GM12878 (cell line): ENCODE measurements at regions of chr5 and their contacts with region 1.

Region 1: GRCh38 chr5:132064738-132065331 is 4.4 kb downstream of the IL3 start:
- DNase-seq: peak; percentile 45
- ATAC-seq: peak; percentile 91
- H3K4me3 ChIP-seq: no peak overlapping the region
- H3K27ac ChIP-seq: no peak overlapping the region
- H3K4me1 ChIP-seq: no peaks in the 10 kb centered on the region; the same call in 1 of the 2 replicates
- H3K27me3 ChIP-seq: no peaks in the 10 kb centered on the region; a peak in 1 of 4 replicates
- CTCF ChIP-seq: peak; percentile 93 to 97 (median 97)
- EP300 ChIP-seq: no peak
- POLR2A ChIP-seq: no peak
- RAD21 ChIP-seq: peak; percentile 90

Region 2: GRCh38 chr5:131423056-131423455 is 641.8 kb before region 1 on chr5:
- CTCF ChIA-PET with region 1: interaction called, 12 read pairs
- POLR2A ChIA-PET with region 1: no interaction called
- RAD21 ChIA-PET with region 1: no interaction called
- SMC1A ChIA-PET with region 1: no interaction called
- in situ Hi-C with region 1: no loop called
- intact Hi-C with region 1: loop called (anchors 2 kb)
- DNase-seq: no peak
- ATAC-seq: no peak; the same call in 2 of the 3 replicates
- H3K4me3 ChIP-seq: no peak overlapping the region
- H3K27ac ChIP-seq: no peak overlapping the region
- H3K4me1 ChIP-seq: 0 out of 2 replicates have a peak, but pooled peaks cover 2% of the 10 kb centered on the region
- H3K27me3 ChIP-seq: no peaks in the 10 kb centered on the region
- CTCF ChIP-seq: peak; percentile 19 to 55 (median 41); a peak in 3 of 6 replicates
- EP300 ChIP-seq: no peak
- POLR2A ChIP-seq: no peak
- RAD21 ChIP-seq: peak; percentile 40; the same call in 1 of the 2 replicates

Region 3: GRCh38 chr5:132007399-132008165 is 57.3 kb before region 1 on chr5:
- CTCF ChIA-PET with region 1: interaction called, 28 read pairs
- POLR2A ChIA-PET with region 1: no interaction called
- RAD21 ChIA-PET with region 1: interaction called, 10 read pairs
- SMC1A ChIA-PET with region 1: interaction called, 7 read pairs
- in situ Hi-C with region 1: no loop called
- intact Hi-C with region 1: loop called (anchors 5 kb)
- DNase-seq: peak; percentile 49
- ATAC-seq: peak; percentile 93
- H3K4me3 ChIP-seq: no peak overlapping the region
- H3K27ac ChIP-seq: no peak overlapping the region
- H3K4me1 ChIP-seq: no peaks in the 10 kb centered on the region; the same call in 1 of the 2 replicates
- H3K27me3 ChIP-seq: peaks cover 16 to 17% of the 10 kb centered on the region in 2 experiments; a peak in 3 of 4 replicates
- CTCF ChIP-seq: peak; percentile 68 to 77 (median 76); a peak in 5 of 6 replicates
- EP300 ChIP-seq: no peak
- POLR2A ChIP-seq: no peak
- RAD21 ChIP-seq: peak; percentile 91

Region 4: DNA sequence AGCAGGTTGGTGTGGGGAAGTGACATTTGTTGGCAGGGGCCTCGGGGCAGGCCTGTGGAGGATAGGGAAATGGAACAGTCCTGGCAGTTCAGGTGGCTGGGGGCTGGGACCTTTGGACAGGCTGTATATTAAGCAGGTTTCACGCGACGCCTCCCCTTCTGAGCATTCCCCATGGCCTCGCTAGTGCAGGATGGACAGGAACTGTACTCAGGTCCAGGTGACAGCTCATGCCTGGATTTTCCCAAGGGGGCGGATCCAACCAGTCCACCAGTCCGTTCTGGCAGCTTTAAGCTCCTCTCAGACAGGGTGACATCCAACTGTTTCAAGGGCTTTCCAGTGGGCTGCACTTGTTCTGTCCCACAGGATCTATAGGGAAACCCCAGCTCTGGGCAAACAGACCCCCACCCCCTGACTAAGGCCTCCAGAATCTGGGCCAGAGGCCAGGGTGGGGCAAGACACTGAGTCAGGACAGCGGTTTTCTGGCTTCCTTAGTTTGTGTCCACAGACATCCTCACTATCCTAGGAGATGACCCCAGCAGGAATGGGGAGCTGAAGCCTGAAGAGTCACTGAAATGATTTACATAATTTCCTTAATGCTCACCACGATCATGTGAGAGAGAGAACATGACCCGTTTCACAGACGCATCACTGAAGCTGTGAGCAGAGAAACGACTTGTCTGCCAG is 29.7 kb after region 1 on chr5:
- CTCF ChIA-PET with region 1: interaction called, 14 read pairs
- POLR2A ChIA-PET with region 1: no interaction called
- RAD21 ChIA-PET with region 1: interaction called, 4 read pairs
- SMC1A ChIA-PET with region 1: interaction called, 3 read pairs
- in situ Hi-C with region 1: no loop called
- intact Hi-C with region 1: no loop called
- DNase-seq: no peak
- ATAC-seq: no peak
- H3K4me3 ChIP-seq: no peak overlapping the region
- H3K27ac ChIP-seq: no peak overlapping the region
- H3K4me1 ChIP-seq: peaks cover 32% of the 10 kb centered on the region
- H3K27me3 ChIP-seq: no peaks in the 10 kb centered on the region
- CTCF ChIP-seq: no peak
- EP300 ChIP-seq: no peak
- POLR2A ChIP-seq: no peak
- RAD21 ChIP-seq: no peak

Region 5: DNA sequence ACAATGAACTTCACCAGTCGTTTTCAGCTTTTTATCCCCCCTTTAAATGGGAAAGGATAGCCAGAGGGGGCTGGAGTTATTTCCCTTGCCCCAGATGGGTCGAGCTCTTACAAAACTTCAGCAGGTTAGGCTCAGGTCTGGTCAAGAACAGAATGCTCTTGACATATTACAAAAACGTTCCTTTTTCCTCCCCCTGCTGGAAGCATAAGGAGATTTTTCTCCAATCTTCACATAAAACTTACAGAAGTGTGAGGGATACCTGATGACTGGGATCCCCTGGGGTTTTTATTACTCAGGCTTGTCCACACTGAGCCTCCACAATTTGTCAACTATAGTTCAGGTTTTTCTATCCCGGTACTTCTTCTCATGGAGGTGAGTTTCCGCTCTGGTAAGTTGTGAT is 69.5 kb after region 1 on chr5:
- CTCF ChIA-PET with region 1: interaction called, 14 read pairs
- POLR2A ChIA-PET with region 1: no interaction called
- RAD21 ChIA-PET with region 1: interaction called, 4 read pairs
- SMC1A ChIA-PET with region 1: interaction called, 3 read pairs
- in situ Hi-C with region 1: loop called (anchors 5 kb)
- intact Hi-C with region 1: loop called (anchors 1 kb)
- DNase-seq: no peak
- ATAC-seq: peak; percentile 29; the same call in 1 of the 3 replicates
- H3K4me3 ChIP-seq: no peak overlapping the region
- H3K27ac ChIP-seq: no peak overlapping the region
- H3K4me1 ChIP-seq: no peaks in the 10 kb centered on the region
- H3K27me3 ChIP-seq: no peaks in the 10 kb centered on the region
- CTCF ChIP-seq: peak; percentile 21 to 30 (median 23); a peak in 3 of 6 replicates
- EP300 ChIP-seq: no peak
- POLR2A ChIP-seq: no peak
- RAD21 ChIP-seq: peak; percentile 15; the same call in 1 of the 2 replicates

Region 6: GRCh38 chr5:132190161-132190817 is 125.5 kb after region 1 on chr5:
- CTCF ChIA-PET with region 1: interaction called, 8 read pairs
- POLR2A ChIA-PET with region 1: no interaction called
- RAD21 ChIA-PET with region 1: interaction called, 3 read pairs
- SMC1A ChIA-PET with region 1: interaction called, 6 read pairs
- in situ Hi-C with region 1: loop called (anchors 5 kb)
- intact Hi-C with region 1: no loop called
- DNase-seq: no peak
- ATAC-seq: peak; percentile 100
- H3K4me3 ChIP-seq: no peak overlapping the region
- H3K27ac ChIP-seq: no peak overlapping the region
- H3K4me1 ChIP-seq: no peaks in the 10 kb centered on the region
- H3K27me3 ChIP-seq: no peaks in the 10 kb centered on the region
- CTCF ChIP-seq: peak; percentile 64 to 69 (median 65)
- EP300 ChIP-seq: no peak
- POLR2A ChIP-seq: no peak
- RAD21 ChIP-seq: peak; percentile 68

Region 7: GRCh38 chr5:132369474-132370180 is 304.8 kb after region 1 on chr5 and contains the start of gene SLC22A5:
- CTCF ChIA-PET with region 1: interaction called, 11 read pairs
- POLR2A ChIA-PET with region 1: no interaction called
- RAD21 ChIA-PET with region 1: no interaction called
- SMC1A ChIA-PET with region 1: no interaction called
- in situ Hi-C with region 1: no loop called
- intact Hi-C with region 1: no loop called
- DNase-seq: no peak
- ATAC-seq: peak; percentile 97
- H3K4me3 ChIP-seq: peak within 1 kb of the TSS; percentile 84
- H3K27ac ChIP-seq: peak within 1 kb of the TSS; percentile 31; the same call in 1 of the 2 replicates
- H3K4me1 ChIP-seq: peaks cover 8% of the 10 kb centered on the region
- H3K27me3 ChIP-seq: no peaks in the 10 kb centered on the region; a peak in 2 of 4 replicates
- CTCF ChIP-seq: no peak
- EP300 ChIP-seq: no peak
- POLR2A ChIP-seq: peak; percentile 71
- RAD21 ChIP-seq: no peak
- polyA plus RNA-seq, gene SLC22A5: 1.1 to 1.9 TPM